Dendritic cell treated with granulocyte-macrophage colony-stimulating factor and Interleukin-4, amounts not matched to agents 40 ng/mL and 50 ng/mL, for 4 days (primary cell): ENCODE measurements at regions of chr1 and their contacts with region 1.

Region 1: GRCh38 chr1:220776720-220777326 is 9.9 kb upstream of the MTARC1 start:
- H3K4me3 Mint-ChIP-seq: no peak overlapping the region
- H3K27ac Mint-ChIP-seq: no peak overlapping the region
- H3K4me1 Mint-ChIP-seq: peaks cover 16% of the 10 kb centered on the region
- H3K27me3 Mint-ChIP-seq: peaks cover 2% of the 10 kb centered on the region

Region 2: GRCh38 chr1:220189750-220190347 is 587.0 kb before region 1 on chr1:
- intact Hi-C with region 1: loop called (anchors 10 kb)
- H3K4me3 Mint-ChIP-seq: no peak overlapping the region
- H3K27ac Mint-ChIP-seq: no peak overlapping the region
- H3K4me1 Mint-ChIP-seq: no peaks in the 10 kb centered on the region
- H3K27me3 Mint-ChIP-seq: no peaks in the 10 kb centered on the region

Region 3: DNA sequence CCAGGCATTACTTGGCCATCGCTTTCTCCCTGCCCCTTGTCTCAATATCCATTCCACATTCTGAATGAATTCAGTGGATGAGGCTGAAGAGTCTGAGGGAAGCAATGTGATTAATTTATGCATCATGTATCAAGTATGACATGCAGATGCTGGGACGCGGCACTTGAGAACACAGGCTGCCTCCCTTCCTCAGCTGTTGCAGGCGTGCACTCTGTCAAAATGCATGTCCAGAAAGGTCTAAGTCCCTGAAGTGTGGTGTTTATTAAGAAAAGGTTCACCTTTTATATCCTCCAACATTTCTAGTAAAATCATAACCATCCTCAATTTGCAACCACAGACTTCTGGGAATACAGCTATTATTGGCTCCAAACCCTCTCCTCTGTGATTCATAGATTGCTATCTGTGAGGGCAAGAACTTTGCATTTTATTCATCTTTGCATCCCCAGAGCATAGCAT is 481.9 kb before region 1 on chr1:
- intact Hi-C with region 1: loop called (anchors 5 kb)
- H3K4me3 Mint-ChIP-seq: no peak overlapping the region
- H3K27ac Mint-ChIP-seq: no peak overlapping the region
- H3K4me1 Mint-ChIP-seq: peaks cover 5% of the 10 kb centered on the region
- H3K27me3 Mint-ChIP-seq: peaks cover 3% of the 10 kb centered on the region

Region 4: GRCh38 chr1:220680085-220680687 is 96.6 kb before region 1 on chr1:
- intact Hi-C with region 1: loop called (anchors 2 kb)
- H3K4me3 Mint-ChIP-seq: no peak overlapping the region
- H3K27ac Mint-ChIP-seq: no peak overlapping the region
- H3K4me1 Mint-ChIP-seq: no peaks in the 10 kb centered on the region
- H3K27me3 Mint-ChIP-seq: peaks cover 3% of the 10 kb centered on the region

Region 5: DNA sequence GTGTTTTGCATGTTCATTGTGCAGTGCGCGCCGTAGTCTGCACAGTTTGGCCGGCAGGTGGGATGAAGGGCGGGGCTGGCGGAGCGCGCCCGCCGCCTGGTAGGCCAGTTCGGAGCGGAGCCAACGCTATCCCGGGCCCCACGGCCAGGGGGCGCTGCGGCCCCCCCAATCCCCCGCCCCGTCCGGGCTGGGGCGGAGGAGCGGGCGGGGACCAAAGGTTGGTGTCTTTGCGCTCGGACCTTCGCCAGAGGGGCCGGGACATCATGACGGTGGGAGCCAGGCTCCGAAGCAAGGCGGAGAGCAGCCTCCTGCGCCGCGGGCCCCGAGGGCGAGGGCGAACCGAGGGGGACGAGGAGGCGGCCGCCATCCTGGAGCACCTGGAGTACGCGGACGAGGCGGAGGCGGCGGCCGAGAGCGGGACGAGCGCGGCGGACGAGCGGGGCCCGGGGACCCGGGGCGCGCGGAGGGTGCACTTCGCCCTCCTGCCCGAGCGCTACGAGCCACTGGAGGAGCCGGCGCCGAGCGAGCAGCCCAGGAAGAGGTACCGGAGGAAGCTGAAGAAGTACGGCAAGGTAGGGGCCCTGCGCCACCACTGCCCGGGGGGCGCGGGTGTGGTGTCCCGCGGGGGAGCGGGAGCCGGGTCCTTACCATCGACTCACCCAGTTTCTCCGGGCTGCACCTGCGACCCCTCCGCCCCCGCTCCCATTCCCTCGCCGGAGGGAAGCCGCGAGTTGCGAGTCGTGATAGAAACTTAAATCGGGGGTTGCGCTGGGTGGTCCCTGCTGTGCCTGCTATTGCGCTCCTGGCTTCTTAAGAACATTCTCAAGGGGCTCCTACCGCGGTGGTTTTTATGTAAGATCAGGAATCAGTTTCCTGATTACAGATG is 86.4 kb before region 1 on chr1 and contains the start of gene C1orf115:
- intact Hi-C with region 1: loop called (anchors 1 kb)
- H3K4me3 Mint-ChIP-seq: peak within 1 kb of the TSS; percentile 91
- H3K27ac Mint-ChIP-seq: peak within 1 kb of the TSS; percentile 68
- H3K4me1 Mint-ChIP-seq: peaks cover 9% of the 10 kb centered on the region
- H3K27me3 Mint-ChIP-seq: peaks cover 30% of the 10 kb centered on the region

Region 6: DNA sequence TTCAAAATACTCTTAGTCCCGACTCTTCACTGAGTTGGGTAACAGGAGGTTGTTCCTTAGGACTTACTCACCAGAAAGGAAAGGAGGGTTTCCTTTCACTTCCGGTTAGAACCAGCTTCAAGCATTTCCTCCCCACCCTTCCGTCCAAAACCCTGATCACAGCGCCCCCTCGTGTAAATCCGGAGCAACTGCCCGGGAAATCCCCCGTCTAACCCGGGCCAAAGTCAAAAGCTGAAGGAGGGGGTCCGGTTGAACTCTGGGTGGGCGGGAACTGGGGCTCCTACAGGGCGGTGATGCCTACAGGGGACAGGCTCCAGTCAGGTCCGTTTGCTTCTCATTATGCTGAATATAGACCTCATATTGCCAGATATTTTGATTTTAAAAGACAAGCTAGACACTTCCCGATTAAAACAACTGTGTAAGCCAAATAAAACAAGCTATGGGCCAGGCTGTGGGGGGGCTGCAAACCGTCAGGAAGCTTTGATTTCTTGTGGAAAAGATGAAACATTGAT is 43.7 kb before region 1 on chr1:
- intact Hi-C with region 1: loop called (anchors 5 kb)
- H3K4me3 Mint-ChIP-seq: no peak overlapping the region
- H3K27ac Mint-ChIP-seq: peak overlapping the region; percentile 29
- H3K4me1 Mint-ChIP-seq: peaks cover 20% of the 10 kb centered on the region
- H3K27me3 Mint-ChIP-seq: peaks cover 7% of the 10 kb centered on the region

Region 7: DNA sequence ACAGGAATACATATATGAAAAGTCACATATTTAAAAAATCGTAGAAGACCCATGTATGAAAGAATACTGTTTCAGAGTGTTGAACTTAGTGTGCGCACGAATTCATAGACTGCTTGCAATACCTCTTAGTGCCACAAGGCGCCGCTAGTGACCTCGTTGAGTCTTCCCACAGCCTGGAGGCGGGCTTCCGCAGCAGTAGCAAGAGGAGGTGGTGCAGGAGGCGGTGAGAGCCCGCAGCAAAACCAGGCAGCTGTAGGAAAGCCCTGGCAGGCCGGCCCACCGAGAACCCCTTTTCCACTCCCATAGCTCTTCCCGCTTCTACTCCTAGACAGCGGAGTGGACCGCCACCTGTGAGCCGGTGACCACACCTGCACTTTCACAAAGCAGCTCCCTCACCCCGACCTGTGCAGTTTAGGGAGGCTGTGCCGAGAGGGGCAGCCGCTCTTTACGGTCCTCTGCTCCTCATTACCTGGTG is 33.4 kb after region 1 on chr1:
- intact Hi-C with region 1: no loop called
- H3K4me3 Mint-ChIP-seq: peak overlapping the region; percentile 63
- H3K27ac Mint-ChIP-seq: no peak overlapping the region
- H3K4me1 Mint-ChIP-seq: peaks cover 17% of the 10 kb centered on the region
- H3K27me3 Mint-ChIP-seq: no peaks in the 10 kb centered on the region

Region 8: DNA sequence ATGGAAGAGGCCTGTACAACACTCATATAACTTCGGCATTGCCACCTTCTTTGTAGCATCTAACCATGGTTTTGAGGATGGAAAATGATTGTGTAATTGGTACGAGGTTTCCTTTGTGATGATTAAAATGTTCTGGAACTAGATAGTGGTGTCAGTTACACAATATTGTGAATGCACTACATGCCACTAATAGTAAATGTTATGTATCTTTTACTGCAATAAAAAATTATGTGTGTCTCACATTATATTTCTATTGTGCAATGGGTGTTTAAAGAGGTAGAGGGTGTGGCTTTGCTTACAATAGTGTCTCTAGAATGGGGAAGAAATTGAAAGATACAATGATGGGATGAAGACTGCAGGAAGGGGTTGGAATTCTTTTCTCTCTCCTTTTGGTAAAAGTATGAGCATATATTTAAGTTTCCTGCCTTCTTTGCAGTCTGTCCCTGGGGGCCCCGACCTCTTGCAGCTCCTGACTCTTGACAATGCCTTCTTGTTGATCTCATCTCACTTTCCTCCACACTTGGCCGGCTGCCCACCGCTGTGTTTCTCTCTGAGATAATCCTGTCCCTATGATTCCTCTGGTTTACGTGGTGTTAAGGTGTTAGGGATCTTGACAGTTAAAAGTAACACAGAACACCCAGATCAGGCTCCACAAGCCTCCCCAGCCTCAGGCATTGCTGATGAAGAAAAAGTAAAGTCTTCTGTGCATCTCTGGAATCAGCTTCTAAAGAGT is 49.2 kb after region 1 on chr1:
- intact Hi-C with region 1: no loop called
- H3K4me3 Mint-ChIP-seq: no peak overlapping the region
- H3K27ac Mint-ChIP-seq: no peak overlapping the region
- H3K4me1 Mint-ChIP-seq: peaks cover 6% of the 10 kb centered on the region
- H3K27me3 Mint-ChIP-seq: no peaks in the 10 kb centered on the region